Activated naive CD4-positive, alpha-beta T cell treated with anti-CD3 and anti-CD28 coated beads for 36 hours (primary cell): ENCODE measurements at regions of chr13 and their contacts with region 1.

Region 1: DNA sequence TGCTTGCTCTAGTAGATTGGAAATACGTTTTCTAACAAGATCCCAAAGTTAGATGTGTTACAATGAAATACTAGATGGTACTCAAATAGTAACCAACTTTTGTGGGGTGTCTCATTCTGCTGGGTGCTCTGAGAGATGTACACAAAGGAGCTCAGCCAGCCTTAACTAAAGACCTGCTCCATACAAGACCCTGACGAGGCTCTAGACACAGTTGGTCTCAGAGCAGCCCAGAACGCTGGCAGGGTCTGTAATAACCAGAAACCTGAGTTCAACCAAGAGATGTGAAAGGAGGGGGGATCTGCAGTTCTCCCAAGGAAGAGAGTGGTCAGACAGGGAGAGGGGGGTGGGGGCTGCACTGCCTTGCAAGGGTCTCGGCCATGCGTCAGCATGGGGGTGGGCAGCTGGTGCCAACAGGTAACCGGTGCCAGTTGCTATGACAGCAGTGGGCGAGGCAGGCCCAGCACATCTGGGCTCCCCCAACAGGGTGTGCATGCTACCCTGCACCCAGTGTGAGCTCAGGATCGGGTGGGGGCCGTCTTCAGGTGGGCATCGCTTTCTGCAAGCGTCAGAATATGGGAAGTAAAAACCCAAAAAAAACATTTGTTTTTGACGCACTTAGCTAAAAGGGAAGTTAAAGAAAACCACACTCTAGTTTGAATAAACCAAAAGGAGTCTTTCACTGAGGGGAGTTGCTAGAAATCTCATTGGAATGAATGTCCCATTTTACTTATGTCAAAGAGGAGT is 68.0 kb upstream of the GPR183 start:
- DNase-seq: no peak
- H3K4me3 Mint-ChIP-seq: no peak overlapping the region
- H3K27ac Mint-ChIP-seq: no peak overlapping the region
- H3K4me1 Mint-ChIP-seq: peaks cover 80% of the 10 kb centered on the region
- H3K27me3 Mint-ChIP-seq: no peaks in the 10 kb centered on the region

Region 2: GRCh38 chr13:98586400-98587345 is 788.5 kb before region 1 on chr13:
- CTCF ChIA-PET with region 1: no interaction called
- intact Hi-C with region 1: no loop called
- DNase-seq: no peak
- H3K4me3 Mint-ChIP-seq: no peak overlapping the region
- H3K27ac Mint-ChIP-seq: no peak overlapping the region
- H3K4me1 Mint-ChIP-seq: peaks cover 14% of the 10 kb centered on the region
- H3K27me3 Mint-ChIP-seq: no peaks in the 10 kb centered on the region

Region 3: DNA sequence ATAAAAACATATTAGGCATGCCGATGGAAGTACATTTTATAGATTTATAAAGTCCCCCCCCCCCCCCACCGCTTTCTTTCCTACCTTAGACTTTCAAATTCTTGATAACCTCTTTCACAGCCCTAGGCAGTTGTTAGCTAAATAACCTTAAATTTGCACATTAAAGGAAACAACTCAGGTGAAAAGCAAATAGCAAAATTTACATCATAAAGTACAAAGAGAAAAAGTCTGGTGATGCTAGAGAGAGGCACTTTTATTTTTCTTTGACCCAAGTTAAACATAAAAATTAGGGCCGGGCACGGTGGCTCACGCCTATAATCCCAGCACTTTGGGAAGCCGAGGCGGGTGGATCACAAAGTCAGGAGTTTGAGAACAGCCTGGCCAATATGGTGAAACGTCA is 189.6 kb before region 1 on chr13:
- CTCF ChIA-PET with region 1: no interaction called
- intact Hi-C with region 1: no loop called
- DNase-seq: no peak
- H3K4me3 Mint-ChIP-seq: no peak overlapping the region
- H3K27ac Mint-ChIP-seq: no peak overlapping the region
- H3K4me1 Mint-ChIP-seq: peaks cover 3% of the 10 kb centered on the region
- H3K27me3 Mint-ChIP-seq: no peaks in the 10 kb centered on the region

Region 4: DNA sequence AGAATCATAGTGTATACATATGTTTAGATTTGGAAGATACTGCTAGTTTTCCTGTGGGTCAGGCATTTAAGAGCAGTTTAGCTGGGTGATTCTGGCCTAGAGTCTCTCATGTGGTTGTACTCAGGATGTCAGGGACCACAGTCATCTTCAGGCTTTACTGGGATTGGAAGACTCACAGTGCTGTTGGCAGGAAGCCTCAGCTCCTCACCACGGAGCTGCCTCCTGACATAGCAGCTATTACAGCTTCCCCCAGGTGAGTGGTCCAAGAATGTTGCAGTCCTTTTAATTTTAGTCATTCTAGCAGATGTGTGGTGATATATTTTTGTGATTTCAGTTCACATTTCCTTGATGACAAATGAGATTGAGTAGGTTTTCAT is 100.1 kb before region 1 on chr13:
- CTCF ChIA-PET with region 1: interaction called, 7 read pairs
- intact Hi-C with region 1: loop called (anchors 2 kb)
- DNase-seq: peak; percentile 76
- H3K4me3 Mint-ChIP-seq: no peak overlapping the region
- H3K27ac Mint-ChIP-seq: peak overlapping the region; percentile 54
- H3K4me1 Mint-ChIP-seq: peaks cover 93% of the 10 kb centered on the region
- H3K27me3 Mint-ChIP-seq: no peaks in the 10 kb centered on the region

Region 5: DNA sequence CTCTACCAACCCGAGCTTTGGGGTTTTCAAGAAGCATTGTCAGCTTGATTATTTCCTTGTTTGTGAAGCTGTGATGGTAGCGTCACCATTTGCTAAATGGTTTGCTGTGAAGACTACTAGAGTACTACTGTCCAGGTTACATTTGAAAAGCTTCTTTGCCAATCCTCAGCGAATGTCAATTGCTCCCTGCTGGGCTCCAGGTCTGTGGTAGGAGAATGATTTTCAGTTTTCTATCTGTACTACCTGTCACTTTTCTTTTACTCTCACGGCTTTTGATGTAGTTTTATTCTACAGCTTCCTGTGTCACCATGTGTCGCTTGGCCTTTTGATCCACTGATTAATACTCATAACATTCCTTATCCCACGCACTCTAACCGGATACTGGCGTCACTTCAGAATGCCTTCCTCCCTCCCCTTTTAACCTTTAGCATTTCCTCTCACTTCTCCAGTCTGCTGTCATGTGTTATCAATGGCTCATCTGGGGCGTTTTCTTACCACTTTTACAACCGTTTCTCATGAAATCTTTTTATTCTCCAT is 60.5 kb before region 1 on chr13:
- CTCF ChIA-PET with region 1: no interaction called
- intact Hi-C with region 1: loop called (anchors 1 kb)
- DNase-seq: peak; percentile 92
- H3K4me3 Mint-ChIP-seq: peak overlapping the region; percentile 54
- H3K27ac Mint-ChIP-seq: peak overlapping the region; percentile 96
- H3K4me1 Mint-ChIP-seq: peaks cover 82% of the 10 kb centered on the region
- H3K27me3 Mint-ChIP-seq: no peaks in the 10 kb centered on the region